H1 (cell line): ENCODE measurements at regions of chr3 and their contacts with region 1.

Region 1: GRCh38 chr3:183085634-183086390 is 13.5 kb downstream of the MCCC1 start:
- DNase-seq: peak in 1 of 2 experiments; percentile 77
- H3K4me3 ChIP-seq: no peak overlapping the region
- H3K27ac ChIP-seq: no peak overlapping the region
- H3K4me1 ChIP-seq: no peaks in the 10 kb centered on the region
- H3K27me3 ChIP-seq: no peaks in the 10 kb centered on the region
- CTCF ChIP-seq: peak; percentile 63 to 86 (median 65)
- EP300 ChIP-seq: no peak
- POLR2A ChIP-seq: no peak
- RAD21 ChIP-seq: peak; percentile 60 to 65

Region 2: GRCh38 chr3:182909318-182910040 is 176.3 kb before region 1 on chr3:
- CTCF ChIA-PET with region 1: interaction called, 23 read pairs
- POLR2A ChIA-PET with region 1: no interaction called
- DNase-seq: no peak
- H3K4me3 ChIP-seq: no peak overlapping the region
- H3K27ac ChIP-seq: no peak overlapping the region
- H3K4me1 ChIP-seq: peaks cover 0 to 2% (median 1%) of the 10 kb centered on the region in 4 experiments; a peak in 2 of 7 replicates
- H3K27me3 ChIP-seq: no peaks in the 10 kb centered on the region
- CTCF ChIP-seq: peak in 2 of 3 experiments; percentile 37 to 51; a peak in 2 of 4 replicates
- EP300 ChIP-seq: no peak
- POLR2A ChIP-seq: no peak
- RAD21 ChIP-seq: peak; percentile 61 to 62

Region 3: GRCh38 chr3:183069086-183069485 is 16.7 kb before region 1 on chr3:
- CTCF ChIA-PET with region 1: interaction called, 13 read pairs
- POLR2A ChIA-PET with region 1: interaction called, 3 read pairs
- DNase-seq: no peak
- H3K4me3 ChIP-seq: no peak overlapping the region
- H3K27ac ChIP-seq: no peak overlapping the region
- H3K4me1 ChIP-seq: no peaks in the 10 kb centered on the region
- H3K27me3 ChIP-seq: no peaks in the 10 kb centered on the region
- CTCF ChIP-seq: no peak
- EP300 ChIP-seq: no peak
- POLR2A ChIP-seq: no peak
- RAD21 ChIP-seq: no peak

Region 4: DNA sequence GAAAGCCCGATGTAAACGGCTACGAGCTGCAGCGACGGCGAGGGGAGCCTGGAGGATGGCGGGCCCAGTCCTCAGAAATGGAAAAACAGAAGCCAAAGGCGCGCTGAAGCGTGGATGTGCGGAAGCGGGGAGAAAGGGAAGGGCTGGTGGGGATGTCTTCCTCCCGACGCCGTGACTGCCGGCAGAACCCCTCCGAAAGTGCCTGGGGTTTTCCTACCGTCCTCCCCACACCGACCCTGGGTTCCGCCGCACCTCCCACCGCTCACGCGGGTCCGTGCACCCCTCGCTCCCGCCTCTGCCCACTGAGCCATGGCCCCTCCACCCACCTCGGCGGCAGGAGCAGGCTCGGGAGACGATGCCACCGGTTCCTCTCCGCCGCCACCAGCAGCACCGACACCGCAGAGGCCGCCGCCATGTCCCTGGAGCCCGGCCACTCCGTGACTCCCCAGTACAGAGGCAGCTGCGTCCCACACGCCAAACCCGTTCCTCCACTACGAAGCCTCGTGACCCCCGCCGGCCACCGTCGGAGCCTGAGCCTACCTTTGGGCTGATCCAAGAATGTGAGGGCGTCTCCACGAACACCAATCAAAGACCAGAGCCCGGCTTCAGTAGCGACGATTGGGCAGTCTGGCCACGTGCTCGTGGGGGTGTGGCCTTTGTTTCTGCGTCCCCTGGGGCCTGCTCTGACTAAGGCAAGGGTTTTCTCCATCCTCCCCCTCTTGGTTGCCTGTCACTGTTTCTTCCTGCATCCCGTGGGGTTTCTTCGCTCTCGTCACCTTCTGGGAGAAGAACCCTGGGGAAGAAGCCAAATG is 13.4 kb after region 1 on chr3 and contains the start of gene MCCC1:
- CTCF ChIA-PET with region 1: interaction called, 60 read pairs
- POLR2A ChIA-PET with region 1: interaction called, 29 read pairs
- DNase-seq: peak; percentile 97 to 98
- H3K4me3 ChIP-seq: peak within 1 kb of the TSS; percentile 83 to 93 (median 86)
- H3K27ac ChIP-seq: peak within 1 kb of the TSS; percentile 74
- H3K4me1 ChIP-seq: no peaks in the 10 kb centered on the region; a peak in 2 of 7 replicates
- H3K27me3 ChIP-seq: no peaks in the 10 kb centered on the region
- CTCF ChIP-seq: no peak
- EP300 ChIP-seq: peak in 1 of 2 experiments; percentile 50; a peak in 1 of 3 replicates
- POLR2A ChIP-seq: peak; percentile 56 to 94
- RAD21 ChIP-seq: no peak
- total RNA-seq, gene MCCC1: 21.5 and 24.6 TPM in 2 replicates

Region 5: DNA sequence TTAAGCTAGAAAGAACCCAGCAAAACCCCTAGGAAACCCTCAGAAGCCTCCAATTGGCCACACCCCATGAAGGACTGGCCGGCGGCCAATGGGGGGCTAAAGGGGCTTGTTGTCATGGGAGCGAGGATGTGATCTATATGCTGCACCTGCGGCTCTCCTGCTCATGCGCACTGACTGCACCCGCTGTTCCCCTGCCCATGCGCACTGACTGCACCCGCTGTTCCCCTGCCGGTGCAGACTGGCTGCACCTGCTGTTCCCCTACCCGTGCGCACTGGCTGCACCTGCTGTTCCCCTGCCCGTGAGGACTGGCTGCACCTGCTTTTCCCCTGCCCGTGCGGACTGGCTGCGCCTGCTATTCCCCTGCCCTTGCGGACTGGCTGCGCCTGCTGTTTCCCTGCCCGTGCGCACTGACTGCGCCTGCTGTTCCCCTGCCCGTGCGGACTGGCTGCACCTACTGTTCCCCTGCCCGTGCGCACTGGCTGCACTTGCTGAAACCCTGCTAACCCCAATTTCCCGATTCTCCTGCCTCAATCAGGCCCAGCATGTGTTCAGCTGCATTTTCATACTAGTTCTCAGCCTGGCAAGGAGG is 30.3 kb after region 1 on chr3:
- CTCF ChIA-PET with region 1: interaction called, 10 read pairs
- POLR2A ChIA-PET with region 1: no interaction called
- DNase-seq: peak; percentile 90 to 91
- H3K4me3 ChIP-seq: peak overlapping the region; percentile 23 to 60 (median 54)
- H3K27ac ChIP-seq: no peak overlapping the region
- H3K4me1 ChIP-seq: peaks cover 10 to 17% (median 14%) of the 10 kb centered on the region in 4 experiments
- H3K27me3 ChIP-seq: peaks cover 0 to 8% (median 5%) of the 10 kb centered on the region in 4 experiments; a peak in 3 of 7 replicates
- CTCF ChIP-seq: no peak
- EP300 ChIP-seq: peak in 1 of 2 experiments; percentile 75; a peak in 1 of 3 replicates
- POLR2A ChIP-seq: no peak
- RAD21 ChIP-seq: no peak